ENCODE measurements at regions of chr15 and their contacts with region 1.

Region 1: DNA sequence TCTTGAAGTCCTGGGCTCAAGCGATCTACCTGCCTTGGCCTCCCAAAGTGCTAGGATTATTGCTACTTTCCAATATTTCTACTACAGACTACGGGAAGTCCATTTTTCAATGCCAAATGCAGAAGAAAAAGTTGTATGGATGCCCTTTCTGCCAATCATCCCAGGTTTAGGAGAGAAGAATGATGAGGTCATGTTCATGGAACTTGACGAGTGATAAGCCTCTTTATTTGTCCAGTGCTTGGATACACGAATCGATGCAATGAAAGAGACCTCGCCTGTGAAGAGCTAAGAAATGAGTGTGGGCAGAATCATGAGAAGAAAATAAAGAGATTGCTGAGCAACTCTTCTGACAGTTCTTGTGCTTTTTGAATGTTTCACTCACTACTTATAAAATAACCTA is 1.0 kb upstream of the SLC28A1 start:
- DNase-seq: no peak
- CTCF ChIP-seq: no peak

Region 2: GRCh38 chr15:84645496-84645895 is 237.9 kb before region 1 on chr15:
- CTCF ChIA-PET with region 1: no interaction called
- POLR2A ChIA-PET with region 1: no interaction called
- DNase-seq: no peak
- CTCF ChIP-seq: no peak

Region 3: GRCh38 chr15:84863565-84864443 is 19.6 kb before region 1 on chr15:
- CTCF ChIA-PET with region 1: interaction called, 15 read pairs
- POLR2A ChIA-PET with region 1: no interaction called
- DNase-seq: no peak
- CTCF ChIP-seq: no peak

Region 4: GRCh38 chr15:85116925-85117680 is 233.7 kb after region 1 on chr15:
- CTCF ChIA-PET with region 1: no interaction called
- POLR2A ChIA-PET with region 1: no interaction called
- DNase-seq: peak; percentile 47
- CTCF ChIP-seq: no peak